Activated CD4-positive, alpha-beta memory T cell treated with anti-CD3 and anti-CD28 coated beads for 36 hours (primary cell): ENCODE measurements at regions of chr14 and their contacts with region 1.

Region 1: GRCh38 chr14:56129933-56130332 is 11.7 kb downstream of the PELI2 start:
- DNase-seq: no peak
- H3K4me3 Mint-ChIP-seq: no peak overlapping the region
- H3K27ac Mint-ChIP-seq: no peak overlapping the region
- H3K4me1 Mint-ChIP-seq: peaks cover 48% of the 10 kb centered on the region
- H3K27me3 Mint-ChIP-seq: peaks cover under 1% of the 10 kb centered on the region

Region 2: DNA sequence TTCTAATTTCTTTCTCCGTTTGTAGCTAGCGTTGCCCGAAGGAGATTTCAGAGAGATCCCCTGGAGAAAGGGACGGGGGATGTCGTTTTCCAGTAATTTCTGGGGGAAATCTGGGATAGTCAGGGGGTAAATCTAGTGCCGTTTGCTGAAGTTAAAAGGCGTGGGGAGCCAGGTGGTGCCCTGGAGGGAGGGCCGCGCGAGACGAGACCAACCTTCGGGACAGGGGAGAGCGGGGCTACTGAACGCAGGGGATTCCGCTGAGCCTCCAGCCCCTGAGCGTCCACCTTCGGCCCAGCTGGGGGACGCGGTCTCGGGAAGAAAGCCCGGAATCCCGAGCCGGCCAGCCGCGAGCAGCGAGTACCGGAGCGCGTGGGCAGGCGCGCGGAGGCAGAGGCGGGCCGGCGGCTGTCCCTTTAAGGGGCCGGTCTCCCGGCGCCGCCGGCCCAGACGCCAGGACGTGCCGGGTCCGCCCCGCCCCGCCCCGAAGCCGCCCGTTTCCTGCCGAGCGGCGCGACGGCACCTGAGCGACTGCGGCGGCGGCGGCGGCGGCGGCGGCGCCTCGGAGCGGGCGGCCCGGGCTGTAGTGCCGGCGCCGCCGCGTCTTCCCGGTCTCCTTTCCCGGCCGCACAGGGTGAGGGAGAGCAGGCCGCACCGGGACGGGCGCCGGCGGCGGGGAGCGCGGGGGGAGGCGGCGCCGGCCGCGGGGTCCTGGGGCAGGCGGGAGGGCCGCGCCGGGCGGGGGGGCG is 550.0 kb before region 1 on chr14 and contains the start of gene KTN1:
- CTCF ChIA-PET with region 1: no interaction called
- POLR2A ChIA-PET with region 1: no interaction called
- intact Hi-C with region 1: loop called (anchors 5 kb)
- DNase-seq: peak; percentile 87
- H3K4me3 Mint-ChIP-seq: peak within 1 kb of the TSS; percentile 92
- H3K27ac Mint-ChIP-seq: peak within 1 kb of the TSS; percentile 90
- H3K4me1 Mint-ChIP-seq: peaks cover 31% of the 10 kb centered on the region
- H3K27me3 Mint-ChIP-seq: no peaks in the 10 kb centered on the region
- total RNA-seq, gene KTN1: 126 to 134 TPM

Region 3: DNA sequence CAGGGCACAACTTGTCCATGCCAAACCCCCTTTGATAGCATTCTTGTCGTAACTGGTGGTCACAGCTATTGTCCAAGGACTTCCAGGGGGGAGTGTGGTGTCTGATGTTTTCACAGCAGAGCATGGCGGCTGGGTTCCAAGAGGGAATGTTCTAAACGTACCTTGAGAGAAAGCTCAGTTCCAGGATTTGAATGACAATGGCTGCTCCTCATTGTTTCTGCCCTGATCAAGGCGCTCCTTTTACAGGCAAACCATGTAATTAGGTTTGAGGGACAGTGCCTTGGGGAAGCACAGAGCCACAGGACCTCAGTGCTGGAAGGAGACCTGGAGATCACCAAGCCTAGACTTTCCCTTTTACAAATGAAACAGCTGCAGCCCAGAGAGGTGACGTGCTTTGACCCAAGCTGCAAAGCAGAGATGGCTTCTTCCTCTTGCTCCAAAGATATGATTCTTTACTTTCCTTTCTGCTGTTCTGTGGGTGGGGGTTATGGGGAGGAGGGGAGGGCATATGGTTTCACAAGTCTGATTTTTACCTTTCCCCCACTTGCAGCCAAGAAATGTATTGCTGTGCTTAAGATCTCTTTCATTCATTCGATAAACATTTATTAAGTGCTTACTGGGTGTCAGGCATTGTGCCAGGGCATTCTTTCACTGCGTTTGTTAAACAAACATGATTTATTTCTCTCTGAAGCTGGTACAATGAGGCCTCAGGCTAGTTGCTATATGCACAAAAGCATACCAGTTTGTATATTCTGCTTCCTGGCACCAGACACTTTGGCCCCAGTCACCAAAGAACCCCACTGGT is 377.1 kb before region 1 on chr14:
- CTCF ChIA-PET with region 1: no interaction called
- POLR2A ChIA-PET with region 1: no interaction called
- intact Hi-C with region 1: no loop called
- DNase-seq: no peak
- H3K4me3 Mint-ChIP-seq: no peak overlapping the region
- H3K27ac Mint-ChIP-seq: no peak overlapping the region
- H3K4me1 Mint-ChIP-seq: no peaks in the 10 kb centered on the region
- H3K27me3 Mint-ChIP-seq: no peaks in the 10 kb centered on the region

Region 4: GRCh38 chr14:56145965-56146364 is 16.0 kb after region 1 on chr14:
- CTCF ChIA-PET with region 1: interaction called, 4 read pairs
- POLR2A ChIA-PET with region 1: no interaction called
- intact Hi-C with region 1: loop called (anchors 1 kb)
- DNase-seq: peak; percentile 59
- H3K4me3 Mint-ChIP-seq: no peak overlapping the region
- H3K27ac Mint-ChIP-seq: no peak overlapping the region
- H3K4me1 Mint-ChIP-seq: peaks cover 52% of the 10 kb centered on the region
- H3K27me3 Mint-ChIP-seq: no peaks in the 10 kb centered on the region

Region 5: GRCh38 chr14:56181681-56182085 is 51.8 kb after region 1 on chr14:
- CTCF ChIA-PET with region 1: no interaction called
- POLR2A ChIA-PET with region 1: no interaction called
- intact Hi-C with region 1: no loop called
- DNase-seq: no peak
- H3K4me3 Mint-ChIP-seq: no peak overlapping the region
- H3K27ac Mint-ChIP-seq: no peak overlapping the region
- H3K4me1 Mint-ChIP-seq: no peaks in the 10 kb centered on the region
- H3K27me3 Mint-ChIP-seq: no peaks in the 10 kb centered on the region

Region 6: DNA sequence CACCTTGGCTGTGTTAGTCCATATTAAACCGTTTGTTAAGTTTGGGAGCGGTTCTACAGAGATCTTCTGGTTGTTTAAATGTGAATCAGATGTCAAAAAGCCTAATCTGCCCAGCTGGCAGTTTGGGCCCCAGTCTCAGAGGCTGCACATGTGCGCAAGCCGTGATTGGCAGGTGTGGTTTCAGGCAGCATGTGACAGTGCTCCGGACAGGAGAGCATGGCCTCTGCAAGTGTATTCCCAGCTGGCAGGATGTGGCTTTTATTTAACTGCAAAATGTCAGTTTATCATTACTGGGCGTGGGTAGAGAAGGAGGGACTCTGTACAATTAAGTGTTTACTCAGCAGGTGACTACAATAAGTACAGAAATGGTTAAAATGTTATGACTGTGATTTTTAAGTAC is 65.8 kb after region 1 on chr14:
- CTCF ChIA-PET with region 1: no interaction called
- POLR2A ChIA-PET with region 1: no interaction called
- intact Hi-C with region 1: loop called (anchors 10 kb)
- DNase-seq: peak; percentile 63
- H3K4me3 Mint-ChIP-seq: no peak overlapping the region
- H3K27ac Mint-ChIP-seq: no peak overlapping the region
- H3K4me1 Mint-ChIP-seq: peaks cover 22% of the 10 kb centered on the region
- H3K27me3 Mint-ChIP-seq: no peaks in the 10 kb centered on the region

Region 7: DNA sequence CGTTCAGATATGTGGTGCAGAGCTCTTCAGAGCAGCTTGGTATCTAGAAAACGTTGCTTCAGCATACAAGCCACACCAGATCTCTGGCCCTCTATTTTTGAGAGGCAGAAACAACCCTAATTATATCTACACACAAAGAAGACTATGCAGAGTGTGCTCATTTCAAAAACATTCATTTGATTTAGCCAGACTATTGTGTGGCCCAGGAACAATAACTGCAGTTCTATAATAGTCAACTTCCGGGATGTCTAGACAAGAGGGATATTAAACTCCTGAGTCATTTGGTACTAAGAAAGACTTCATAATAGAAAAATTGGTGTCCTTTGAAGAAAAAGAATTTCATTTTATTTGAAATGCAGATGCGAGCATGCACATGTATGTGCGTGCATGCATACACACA is 142.0 kb after region 1 on chr14:
- CTCF ChIA-PET with region 1: no interaction called
- POLR2A ChIA-PET with region 1: no interaction called
- intact Hi-C with region 1: no loop called
- DNase-seq: no peak
- H3K4me3 Mint-ChIP-seq: no peak overlapping the region
- H3K27ac Mint-ChIP-seq: no peak overlapping the region
- H3K4me1 Mint-ChIP-seq: no peaks in the 10 kb centered on the region
- H3K27me3 Mint-ChIP-seq: no peaks in the 10 kb centered on the region

Region 8: DNA sequence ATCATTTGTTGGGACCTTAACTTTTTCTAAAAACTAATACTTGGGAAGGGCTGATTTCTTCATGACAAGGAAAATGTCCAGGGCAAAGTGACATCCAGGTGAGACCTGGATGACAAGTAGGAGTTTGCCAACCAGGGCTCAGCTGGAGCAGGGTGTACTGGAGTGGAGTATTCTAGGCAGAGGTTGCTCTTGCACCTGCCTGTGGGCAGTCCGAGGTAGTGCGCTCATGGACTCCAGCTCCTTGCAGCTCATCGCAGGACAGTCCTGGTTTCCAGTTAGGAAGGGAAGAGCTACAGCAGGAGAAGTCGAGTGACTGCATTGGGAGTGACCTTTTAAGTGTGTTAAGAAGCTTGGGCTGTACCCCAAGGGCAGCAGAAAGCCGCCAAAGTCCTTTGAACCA is 164.2 kb after region 1 on chr14:
- CTCF ChIA-PET with region 1: no interaction called
- POLR2A ChIA-PET with region 1: no interaction called
- intact Hi-C with region 1: no loop called
- DNase-seq: no peak
- H3K4me3 Mint-ChIP-seq: no peak overlapping the region
- H3K27ac Mint-ChIP-seq: no peak overlapping the region
- H3K4me1 Mint-ChIP-seq: no peaks in the 10 kb centered on the region
- H3K27me3 Mint-ChIP-seq: no peaks in the 10 kb centered on the region